ENCODE measurements at regions of chr15 and their contacts with region 1.

Region 1: GRCh38 chr15:34708422-34708821 is 46.4 kb downstream of the GJD2 start:
- DNase-seq: no peak
- H3K4me3 ChIP-seq: no peak overlapping the region
- CTCF ChIP-seq: no peak
- POLR2A ChIP-seq: no peak

Region 2: DNA sequence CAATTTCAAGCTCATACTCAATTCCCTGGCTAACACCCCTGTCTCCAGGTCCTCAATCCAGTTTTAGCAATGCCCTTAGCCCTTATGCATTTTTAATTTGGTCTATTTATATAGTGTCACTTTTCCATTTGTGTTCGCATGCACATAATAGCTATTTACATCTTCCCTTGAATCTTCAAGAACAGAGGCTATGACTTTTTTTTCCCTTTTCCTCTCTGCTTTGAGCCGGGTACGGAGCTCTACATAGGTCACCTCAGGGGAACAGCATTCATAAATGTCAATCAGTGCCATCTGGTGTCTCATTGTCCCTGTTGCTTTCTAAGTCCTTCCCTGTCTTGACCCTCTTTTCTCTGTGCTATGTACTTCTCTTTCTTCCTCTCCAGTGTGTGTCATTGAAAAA is 113.4 kb after region 1 on chr15:
- intact Hi-C with region 1: no loop called
- DNase-seq: no peak
- H3K4me3 ChIP-seq: no peak overlapping the region
- CTCF ChIP-seq: no peak
- POLR2A ChIP-seq: no peak

Region 3: DNA sequence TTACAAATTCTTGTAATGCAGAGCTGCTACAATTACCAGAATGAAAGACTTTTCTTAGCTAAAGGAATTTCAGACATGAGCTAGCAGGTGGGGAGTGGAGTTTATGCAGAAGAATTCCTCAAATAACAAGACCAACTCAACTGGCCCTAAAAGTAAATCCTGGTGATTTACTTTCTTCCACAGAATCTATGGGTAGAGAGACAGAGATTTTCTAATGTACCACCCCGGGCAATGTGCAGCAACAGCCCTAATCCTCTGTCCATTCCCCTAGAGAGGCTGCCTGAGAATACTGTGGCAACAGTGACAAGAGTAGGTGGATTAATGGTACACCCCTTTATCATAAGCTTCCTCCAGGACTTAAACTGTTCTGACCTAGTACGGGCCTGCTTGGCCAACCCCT is 205.9 kb after region 1 on chr15:
- intact Hi-C with region 1: loop called (anchors 10 kb)
- DNase-seq: no peak
- H3K4me3 ChIP-seq: no peak overlapping the region
- CTCF ChIP-seq: no peak
- POLR2A ChIP-seq: no peak

Region 4: GRCh38 chr15:35362195-35362829 is 653.9 kb after region 1 on chr15:
- intact Hi-C with region 1: loop called (anchors 5 kb)
- DNase-seq: no peak
- H3K4me3 ChIP-seq: no peak overlapping the region
- CTCF ChIP-seq: no peak
- POLR2A ChIP-seq: no peak